Right ventricle myocardium superior (tissue), 1 donor: ENCODE measurements at regions of chr17 and their contacts with region 1.

Region 1: GRCh38 chr17:4966844-4967538 is 626 bp downstream of the SPAG7 start:
- DNase-seq: peak; percentile 99
- ATAC-seq: peak; percentile 88

Region 2: GRCh38 chr17:4949321-4950074 is 17.5 kb before region 1 on chr17:
- intact Hi-C with region 1: loop called (anchors 2 kb)
- DNase-seq: peak; percentile 85
- ATAC-seq: peak; percentile 32